CD8-positive, alpha-beta memory T cell (primary cell): ENCODE measurements at regions of chr7 and their contacts with region 1.

Region 1: GRCh38 chr7:5083311-5083711 is 37.7 kb downstream of the RBAK start:
- DNase-seq: no peak
- H3K4me3 ChIP-seq: no peak overlapping the region
- H3K4me3 Mint-ChIP-seq: peak overlapping the region in 1 of 7 donors; percentile 59
- H3K27ac ChIP-seq: no peak overlapping the region
- H3K27ac Mint-ChIP-seq: no peak overlapping the region
- H3K4me1 ChIP-seq: no peaks in the 10 kb centered on the region
- H3K4me1 Mint-ChIP-seq: peaks cover 0 to 4% (median 2%) of the 10 kb centered on the region in 3 donors
- H3K27me3 ChIP-seq: no peaks in the 10 kb centered on the region
- H3K27me3 Mint-ChIP-seq: peaks cover 0 to 11% of the 10 kb centered on the region in 2 donors

Region 2: GRCh38 chr7:4797858-4798705 is 285.2 kb before region 1 on chr7:
- CTCF ChIA-PET with region 1: interaction called, 42 read pairs
- POLR2A ChIA-PET with region 1: no interaction called
- DNase-seq: peak in 4 of 5 donors; percentile 38 to 61 (median 48)
- H3K4me3 ChIP-seq: no peak overlapping the region
- H3K4me3 Mint-ChIP-seq: no peak overlapping the region
- H3K27ac ChIP-seq: no peak overlapping the region
- H3K27ac Mint-ChIP-seq: no peak overlapping the region
- H3K4me1 ChIP-seq: no peaks in the 10 kb centered on the region
- H3K4me1 Mint-ChIP-seq: peaks cover 0 to 11% (median 5%) of the 10 kb centered on the region in 3 donors
- H3K27me3 ChIP-seq: no peaks in the 10 kb centered on the region
- H3K27me3 Mint-ChIP-seq: no peaks in the 10 kb centered on the region

Region 3: GRCh38 chr7:4830176-4830575 is 253.1 kb before region 1 on chr7:
- CTCF ChIA-PET with region 1: interaction called, 27 read pairs
- POLR2A ChIA-PET with region 1: no interaction called
- DNase-seq: peak; percentile 10 to 63 (median 29)
- H3K4me3 ChIP-seq: no peak overlapping the region
- H3K4me3 Mint-ChIP-seq: no peak overlapping the region
- H3K27ac ChIP-seq: no peak overlapping the region
- H3K27ac Mint-ChIP-seq: no peak overlapping the region
- H3K4me1 ChIP-seq: no peaks in the 10 kb centered on the region
- H3K4me1 Mint-ChIP-seq: peaks cover 0 to 6% (median 4%) of the 10 kb centered on the region in 3 donors
- H3K27me3 ChIP-seq: no peaks in the 10 kb centered on the region
- H3K27me3 Mint-ChIP-seq: peaks cover 3% of the 10 kb centered on the region in 2 donors

Region 4: DNA sequence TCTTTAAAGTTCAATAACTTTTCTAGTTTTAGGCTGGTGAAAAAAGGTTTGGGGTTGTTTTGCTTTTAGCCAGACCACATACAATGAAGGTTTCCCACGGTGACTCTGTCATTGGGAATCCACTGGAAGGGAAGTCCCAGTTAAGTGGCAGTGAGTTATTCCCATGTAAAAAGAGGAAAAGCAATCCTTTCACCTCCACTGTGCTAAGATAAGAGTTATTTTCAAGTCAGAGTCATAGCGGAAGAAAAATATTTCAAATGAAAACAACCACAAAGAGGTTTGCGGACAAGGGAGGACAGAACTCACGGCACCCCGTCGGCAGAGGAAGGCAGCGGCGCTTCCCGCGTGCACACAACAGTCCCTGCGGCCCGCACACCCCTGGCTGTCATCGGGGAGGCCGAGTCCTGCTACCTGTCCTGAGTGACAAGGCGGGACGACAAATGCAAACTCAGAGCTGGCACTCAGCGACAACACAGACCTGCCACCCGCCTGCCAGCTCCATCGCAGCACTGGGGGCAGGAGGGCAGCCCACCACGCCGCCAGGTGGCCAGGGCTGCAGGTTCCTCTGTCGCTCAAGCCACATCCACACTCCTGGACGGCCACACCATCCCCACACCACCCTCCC is 212.1 kb before region 1 on chr7:
- CTCF ChIA-PET with region 1: no interaction called
- POLR2A ChIA-PET with region 1: no interaction called
- DNase-seq: peak in 1 of 5 donors; percentile 3
- H3K4me3 ChIP-seq: no peak overlapping the region
- H3K4me3 Mint-ChIP-seq: no peak overlapping the region
- H3K27ac ChIP-seq: no peak overlapping the region
- H3K27ac Mint-ChIP-seq: no peak overlapping the region
- H3K4me1 ChIP-seq: no peaks in the 10 kb centered on the region
- H3K4me1 Mint-ChIP-seq: peaks cover 2 to 13% (median 5%) of the 10 kb centered on the region in 3 donors
- H3K27me3 ChIP-seq: no peaks in the 10 kb centered on the region
- H3K27me3 Mint-ChIP-seq: peaks cover 23 to 45% of the 10 kb centered on the region in 2 donors